Activated CD8-positive, alpha-beta T cell treated with anti-CD3 and anti-CD28 coated beads, Interleukin-2, amount 10 ng/mL, durations not matched to agents 7 days and 5 days (primary cell): ENCODE measurements at regions of chr11 and their contacts with region 1.

Region 1: DNA sequence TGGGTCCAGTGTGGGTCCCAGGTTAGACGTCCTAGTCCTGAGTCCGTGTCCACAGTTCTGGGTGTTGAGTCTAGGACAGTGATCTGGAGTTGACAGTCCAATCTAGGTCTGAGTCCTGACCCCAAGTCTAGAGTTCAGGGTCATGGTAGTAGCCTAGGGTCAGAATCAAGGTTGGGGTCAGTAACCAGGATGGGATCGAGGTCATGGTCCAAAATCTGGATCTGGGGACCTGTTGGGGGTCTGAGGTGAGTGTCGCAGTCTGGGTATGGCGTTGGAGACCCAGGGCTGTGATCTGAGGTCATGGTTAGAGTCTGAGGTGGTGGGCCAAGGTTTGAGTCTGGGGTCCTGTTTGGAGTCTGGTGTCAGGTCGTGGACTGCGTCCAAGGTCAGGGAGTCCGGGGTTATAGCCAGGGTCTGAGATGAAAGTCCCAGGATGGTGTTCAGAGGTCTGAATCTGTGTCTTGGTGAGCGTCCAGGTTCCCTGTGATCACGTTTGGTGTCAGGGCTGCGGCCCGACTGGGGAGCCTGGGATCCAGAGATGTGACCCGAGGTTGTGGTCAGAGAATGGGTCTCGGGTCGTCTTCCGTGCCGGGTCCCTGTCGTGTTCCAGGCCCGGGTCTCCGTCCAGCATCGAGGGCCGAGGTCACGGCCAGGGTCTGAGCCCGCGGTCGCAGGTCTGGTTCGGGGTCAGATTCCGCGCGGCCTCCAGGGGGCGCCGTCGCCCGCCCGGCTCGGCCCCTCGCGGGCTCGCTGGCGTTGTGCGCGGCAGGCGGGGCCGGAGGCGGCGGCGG is 445 bp upstream of the GRK2 start:
- DNase-seq: peak; percentile 79
- ATAC-seq: peak; percentile 46
- H3K4me3 Mint-ChIP-seq: peak overlapping the region; percentile 77
- H3K27ac Mint-ChIP-seq: peak overlapping the region; percentile 73
- H3K4me1 Mint-ChIP-seq: peaks cover 71% of the 10 kb centered on the region
- H3K27me3 Mint-ChIP-seq: no peaks in the 10 kb centered on the region

Region 2: DNA sequence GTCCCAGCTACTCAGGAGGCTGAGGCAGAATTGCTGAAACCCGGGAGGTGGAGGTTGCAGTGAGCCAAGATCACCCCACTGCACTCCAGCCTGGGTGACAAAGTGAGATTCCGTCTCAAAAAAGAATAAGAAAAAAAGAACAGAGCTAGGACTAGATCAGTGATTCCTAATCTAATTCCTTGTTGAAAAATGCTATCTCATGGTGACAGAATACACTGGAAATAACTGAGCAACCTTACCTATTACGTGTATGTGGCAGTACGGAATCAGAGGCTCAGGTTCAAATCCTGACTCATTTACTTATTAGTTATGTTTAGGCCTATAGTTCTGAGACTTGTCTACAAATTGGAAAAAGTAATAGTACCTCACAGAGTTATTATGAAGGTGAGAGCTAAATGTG is 442.1 kb before region 1 on chr11:
- CTCF ChIA-PET with region 1: no interaction called
- POLR2A ChIA-PET with region 1: no interaction called
- DNase-seq: no peak
- ATAC-seq: no peak
- H3K4me3 Mint-ChIP-seq: no peak overlapping the region
- H3K27ac Mint-ChIP-seq: no peak overlapping the region
- H3K4me1 Mint-ChIP-seq: no peaks in the 10 kb centered on the region
- H3K27me3 Mint-ChIP-seq: no peaks in the 10 kb centered on the region

Region 3: GRCh38 chr11:67213178-67213621 is 52.6 kb before region 1 on chr11:
- CTCF ChIA-PET with region 1: no interaction called
- POLR2A ChIA-PET with region 1: no interaction called
- DNase-seq: no peak
- ATAC-seq: no peak
- H3K4me3 Mint-ChIP-seq: no peak overlapping the region
- H3K27ac Mint-ChIP-seq: no peak overlapping the region
- H3K4me1 Mint-ChIP-seq: peaks cover 6% of the 10 kb centered on the region
- H3K27me3 Mint-ChIP-seq: no peaks in the 10 kb centered on the region

Region 4: GRCh38 chr11:67252831-67253239 is 13.0 kb before region 1 on chr11:
- CTCF ChIA-PET with region 1: interaction called, 54 read pairs
- POLR2A ChIA-PET with region 1: interaction called, 7 read pairs
- DNase-seq: peak; percentile 65
- ATAC-seq: peak; percentile 80
- H3K4me3 Mint-ChIP-seq: no peak overlapping the region
- H3K27ac Mint-ChIP-seq: peak overlapping the region; percentile 48
- H3K4me1 Mint-ChIP-seq: peaks cover 46% of the 10 kb centered on the region
- H3K27me3 Mint-ChIP-seq: no peaks in the 10 kb centered on the region

Region 5: GRCh38 chr11:67283481-67283963 is 17.7 kb after region 1 on chr11:
- CTCF ChIA-PET with region 1: interaction called, 60 read pairs
- POLR2A ChIA-PET with region 1: interaction called, 201 read pairs
- DNase-seq: no peak
- ATAC-seq: no peak
- H3K4me3 Mint-ChIP-seq: no peak overlapping the region
- H3K27ac Mint-ChIP-seq: peak overlapping the region; percentile 57
- H3K4me1 Mint-ChIP-seq: peaks cover 71% of the 10 kb centered on the region
- H3K27me3 Mint-ChIP-seq: no peaks in the 10 kb centered on the region

Region 6: GRCh38 chr11:67317205-67317887 is 51.5 kb after region 1 on chr11:
- CTCF ChIA-PET with region 1: interaction called, 116 read pairs
- POLR2A ChIA-PET with region 1: interaction called, 16 read pairs
- DNase-seq: peak; percentile 99
- ATAC-seq: peak; percentile 91
- H3K4me3 Mint-ChIP-seq: peak overlapping the region; percentile 91
- H3K27ac Mint-ChIP-seq: peak overlapping the region; percentile 99
- H3K4me1 Mint-ChIP-seq: peaks cover 27% of the 10 kb centered on the region
- H3K27me3 Mint-ChIP-seq: peaks cover 2% of the 10 kb centered on the region

Region 7: GRCh38 chr11:67382276-67383136 is 116.7 kb after region 1 on chr11:
- CTCF ChIA-PET with region 1: interaction called, 50 read pairs
- POLR2A ChIA-PET with region 1: interaction called, 3 read pairs
- DNase-seq: peak; percentile 90
- ATAC-seq: peak; percentile 97
- H3K4me3 Mint-ChIP-seq: no peak overlapping the region
- H3K27ac Mint-ChIP-seq: no peak overlapping the region
- H3K4me1 Mint-ChIP-seq: peaks cover 7% of the 10 kb centered on the region
- H3K27me3 Mint-ChIP-seq: peaks cover 19% of the 10 kb centered on the region